ENCODE measurements at regions of chr17 and their contacts with region 1.

Region 1: DNA sequence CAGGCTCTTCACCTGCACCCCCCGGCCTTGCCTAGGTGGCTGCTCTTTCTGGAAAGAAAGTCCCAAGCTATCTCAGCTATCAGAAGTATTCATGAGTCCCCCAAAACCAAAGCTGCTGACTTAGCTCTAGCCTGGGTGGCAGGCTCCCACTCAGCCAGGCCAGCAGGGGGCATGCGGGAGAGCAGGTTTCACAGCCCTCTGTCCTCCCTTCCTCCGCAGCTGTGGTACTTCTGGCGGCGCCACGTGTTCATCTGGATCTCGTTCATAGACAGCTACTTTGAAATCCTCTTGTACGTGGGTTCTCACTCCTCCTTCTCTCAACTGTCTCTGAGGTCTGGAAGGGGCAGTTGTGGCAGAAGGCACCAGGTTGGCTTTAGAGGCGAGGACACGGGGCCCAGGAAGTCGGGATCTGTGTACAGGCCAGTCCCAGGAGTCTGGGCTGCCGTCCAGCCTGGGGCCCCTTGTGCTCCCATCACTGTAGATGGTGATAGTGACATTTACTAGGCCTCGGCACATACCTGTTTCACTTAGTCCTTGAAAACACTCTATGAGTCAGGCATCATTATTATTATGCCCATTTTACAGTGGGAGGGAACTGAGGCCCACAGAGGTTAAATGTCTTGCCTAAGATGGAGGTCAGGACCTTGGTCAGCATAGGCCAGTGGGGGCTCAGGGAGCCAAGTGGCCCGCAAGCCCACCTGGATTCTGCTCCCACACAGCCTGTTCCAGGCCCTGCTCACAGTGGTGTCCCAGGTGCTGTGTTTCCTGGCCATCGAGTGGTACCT is 12.9 kb downstream of the TRPV2 start:
- DNase-seq: peak; percentile 72
- H3K4me3 ChIP-seq: no peak overlapping the region
- H3K27ac ChIP-seq: no peak overlapping the region
- H3K4me1 ChIP-seq: no peaks in the 10 kb centered on the region
- CTCF ChIP-seq: peak; percentile 81

Region 2: DNA sequence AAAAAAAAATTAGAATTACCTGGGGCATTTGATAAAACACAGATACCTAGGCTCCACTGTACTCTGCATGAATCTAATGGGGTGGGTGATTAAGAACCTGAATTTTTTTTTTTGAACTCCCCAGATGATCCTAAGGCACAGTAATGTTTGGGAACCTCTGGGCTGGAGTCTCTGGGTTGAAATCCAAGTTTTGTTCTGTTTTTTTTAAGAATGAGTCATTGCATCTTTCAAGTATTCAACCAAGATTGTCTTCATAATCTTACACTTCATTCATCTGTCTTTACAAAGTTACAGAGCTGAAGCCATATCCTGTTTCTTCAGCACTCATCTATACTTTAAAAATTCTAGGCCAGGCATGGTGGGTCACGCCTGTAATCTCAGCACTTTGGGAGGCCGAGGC is 158.6 kb before region 1 on chr17:
- CTCF ChIA-PET with region 1: no interaction called
- POLR2A ChIA-PET with region 1: no interaction called
- intact Hi-C with region 1: no loop called
- DNase-seq: no peak
- H3K4me3 ChIP-seq: no peak overlapping the region
- H3K27ac ChIP-seq: no peak overlapping the region
- H3K4me1 ChIP-seq: peaks cover 13% of the 10 kb centered on the region
- CTCF ChIP-seq: no peak

Region 3: GRCh38 chr17:16438557-16439302 is 10.4 kb after region 1 on chr17:
- CTCF ChIA-PET with region 1: interaction called, 10 read pairs
- POLR2A ChIA-PET with region 1: interaction called, 10 read pairs
- intact Hi-C with region 1: no loop called
- DNase-seq: peak; percentile 100
- H3K4me3 ChIP-seq: peak overlapping the region; percentile 98
- H3K27ac ChIP-seq: peak overlapping the region; percentile 87
- H3K4me1 ChIP-seq: peaks cover 33% of the 10 kb centered on the region
- CTCF ChIP-seq: no peak

Measured in OCI-LY7 (cell line).